Esophagus squamous epithelium (tissue), 5 donors: ENCODE measurements at regions of chr10 and their contacts with region 1.

Region 1: GRCh38 chr10:75127471-75127870 is 16.0 kb downstream of the SAMD8 start:
- DNase-seq: no peak
- H3K4me3 ChIP-seq: no peak overlapping the region
- H3K27ac ChIP-seq: peak overlapping the region; percentile 40 to 74 (median 62)
- H3K4me1 ChIP-seq: peaks cover 14 to 53% (median 25%) of the 10 kb centered on the region in 3 donors
- H3K27me3 ChIP-seq: no peaks in the 10 kb centered on the region
- CTCF ChIP-seq: no peak
- POLR2A ChIP-seq: no peak

Region 2: GRCh38 chr10:74963549-74963948 is 163.9 kb before region 1 on chr10:
- intact Hi-C with region 1: no loop called
- DNase-seq: no peak
- H3K4me3 ChIP-seq: no peak overlapping the region
- H3K27ac ChIP-seq: no peak overlapping the region
- H3K4me1 ChIP-seq: peaks cover 0 to 8% (median 0%) of the 10 kb centered on the region in 3 donors
- H3K27me3 ChIP-seq: no peaks in the 10 kb centered on the region
- CTCF ChIP-seq: no peak
- POLR2A ChIP-seq: no peak

Region 3: GRCh38 chr10:75202321-75203045 is 75.0 kb after region 1 on chr10:
- intact Hi-C with region 1: no loop called
- DNase-seq: no peak
- H3K4me3 ChIP-seq: no peak overlapping the region
- H3K27ac ChIP-seq: peak overlapping the region; percentile 83 to 100 (median 97)
- H3K4me1 ChIP-seq: peaks cover 23 to 86% (median 47%) of the 10 kb centered on the region in 3 donors
- H3K27me3 ChIP-seq: no peaks in the 10 kb centered on the region
- CTCF ChIP-seq: no peak
- POLR2A ChIP-seq: peak in 1 of 4 donors; percentile 34

Region 4: DNA sequence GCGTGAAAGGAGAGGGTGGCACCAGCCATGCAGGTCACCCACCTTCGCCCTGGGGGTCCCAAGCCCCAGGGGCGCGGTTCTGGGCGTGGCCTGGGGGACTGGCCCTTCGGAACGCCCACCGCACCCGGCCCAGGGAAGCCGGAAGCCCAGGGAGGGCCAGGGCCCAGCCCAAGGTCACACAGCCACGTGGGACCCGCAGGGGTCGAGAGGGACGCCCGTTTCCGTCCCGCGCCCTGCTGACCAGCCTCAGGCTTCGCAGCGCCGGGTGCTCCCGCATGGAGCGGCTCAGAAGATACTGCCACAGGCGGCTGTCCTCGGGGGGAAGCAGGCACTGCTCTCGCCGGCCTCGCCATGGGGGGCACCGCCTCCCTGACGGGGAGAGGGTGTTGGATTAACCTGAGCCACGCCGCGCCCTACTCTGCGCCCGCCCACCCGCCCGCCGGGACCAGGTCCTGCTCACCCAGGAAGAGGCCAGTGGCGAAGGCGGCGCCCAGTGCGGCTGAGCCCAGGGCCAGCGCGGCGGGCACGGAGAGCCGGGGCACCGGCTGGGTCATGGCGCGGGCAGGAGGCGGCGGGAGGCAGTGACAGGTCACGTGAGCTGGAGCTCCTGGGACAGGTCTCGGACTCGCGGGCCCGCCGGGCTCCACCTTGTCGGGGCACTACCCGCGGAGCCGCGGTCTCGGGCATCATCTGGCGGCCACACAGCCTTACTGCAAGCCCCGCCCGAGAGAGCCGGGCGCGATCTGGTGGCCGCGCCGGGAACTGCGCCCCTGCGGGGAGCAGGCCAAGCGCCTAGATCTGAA is 108.1 kb after region 1 on chr10 and contains the start of gene COMTD1:
- intact Hi-C with region 1: loop called (anchors 10 kb)
- DNase-seq: peak; percentile 66
- H3K4me3 ChIP-seq: peak within 1 kb of the TSS; percentile 61 to 82 (median 66)
- H3K27ac ChIP-seq: peak within 1 kb of the TSS; percentile 97 to 99 (median 98)
- H3K4me1 ChIP-seq: peaks cover 11 to 65% (median 21%) of the 10 kb centered on the region in 3 donors
- H3K27me3 ChIP-seq: no peaks in the 10 kb centered on the region
- CTCF ChIP-seq: peak; percentile 100
- POLR2A ChIP-seq: peak in 1 of 4 donors; percentile 47
- total RNA-seq, gene COMTD1: 87.8 to 139 (median 111) TPM